Activated CD4-positive, alpha-beta memory T cell treated with anti-CD3 and anti-CD28 coated beads, Interleukin-2, amount 10 ng/mL, durations not matched to agents 7 days and 5 days (primary cell): ENCODE measurements at regions of chr1 and their contacts with region 1.

Region 1: DNA sequence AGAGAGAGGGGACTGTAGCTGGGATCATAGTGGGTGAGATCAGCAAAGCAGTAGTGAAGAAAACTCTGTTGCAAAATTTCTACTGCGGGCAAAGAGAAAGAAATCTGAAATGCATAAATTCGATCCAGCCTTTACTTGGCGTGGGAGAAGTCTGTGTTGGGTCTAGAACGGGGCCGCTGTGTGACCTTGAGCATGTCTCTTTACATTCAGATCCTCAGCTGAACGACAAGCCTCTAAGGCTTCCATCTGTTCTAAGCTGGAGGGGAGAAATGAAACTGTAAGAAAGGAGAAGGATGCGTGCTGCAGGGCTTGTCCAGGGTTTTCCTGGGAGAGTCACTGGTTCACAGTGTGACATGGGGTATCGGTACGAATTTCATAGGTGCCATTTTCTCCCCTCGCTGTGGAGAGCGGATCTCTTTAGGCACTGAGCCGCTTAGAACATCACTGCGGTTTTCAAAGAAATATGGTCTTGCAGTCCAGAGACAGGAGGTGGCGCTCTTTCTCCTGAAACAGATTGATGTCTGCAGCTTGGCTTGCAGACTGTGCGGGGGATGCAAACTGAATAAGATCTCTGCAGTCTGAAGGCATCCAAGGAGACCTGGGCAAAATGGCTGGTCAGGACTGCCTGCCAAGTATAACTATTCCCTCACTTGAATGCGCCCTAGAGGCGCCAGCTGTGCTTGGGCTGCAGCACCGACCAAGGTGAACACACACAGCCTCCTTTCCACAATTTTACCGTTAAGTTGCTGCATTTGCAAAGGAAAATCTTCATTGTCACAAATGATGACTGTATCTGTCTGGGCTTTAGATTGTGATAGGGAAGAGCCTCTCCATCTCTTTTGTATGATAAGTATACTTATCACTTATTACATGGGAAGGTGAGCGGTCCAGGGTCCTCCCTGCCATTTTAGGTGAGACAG is 104.1 kb downstream of the XCL2 start:
- DNase-seq: peak; percentile 88
- H3K4me3 Mint-ChIP-seq: peak overlapping the region; percentile 64
- H3K27ac Mint-ChIP-seq: peak overlapping the region; percentile 63
- H3K4me1 Mint-ChIP-seq: peaks cover 50% of the 10 kb centered on the region
- H3K27me3 Mint-ChIP-seq: peaks cover 2% of the 10 kb centered on the region

Region 2: DNA sequence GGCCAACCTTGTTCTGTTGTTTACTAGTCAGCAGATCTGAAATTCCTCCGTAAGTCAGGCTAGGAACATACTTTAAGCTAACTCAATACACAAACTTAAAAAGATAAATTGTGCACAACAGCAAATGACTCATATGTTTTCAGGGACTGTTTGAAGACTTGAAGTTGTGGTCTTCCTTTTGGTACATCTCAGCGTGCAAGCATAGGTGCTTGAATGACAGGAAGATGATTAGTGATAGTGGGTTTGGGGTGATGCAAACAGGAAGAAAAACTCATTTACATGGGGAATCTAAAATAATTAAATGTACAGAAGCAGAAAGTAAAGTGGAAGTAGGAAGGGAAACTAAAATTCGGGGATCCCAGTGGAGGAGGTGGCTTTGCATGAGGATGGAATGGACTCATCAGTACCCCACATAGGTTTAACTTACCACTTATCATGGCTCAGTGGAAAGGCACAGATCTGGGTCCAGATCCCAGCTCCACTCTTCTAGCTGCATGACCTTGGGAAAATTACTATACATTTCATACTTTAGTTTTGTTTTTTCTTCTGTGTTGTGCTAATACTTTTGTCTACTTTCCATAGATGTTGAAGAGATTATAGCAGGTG is 18.2 kb before region 1 on chr1:
- CTCF ChIA-PET with region 1: interaction called, 22 read pairs
- POLR2A ChIA-PET with region 1: interaction called, 5 read pairs
- DNase-seq: peak; percentile 41
- H3K4me3 Mint-ChIP-seq: peak overlapping the region; percentile 45
- H3K27ac Mint-ChIP-seq: peak overlapping the region; percentile 86
- H3K4me1 Mint-ChIP-seq: peaks cover 42% of the 10 kb centered on the region
- H3K27me3 Mint-ChIP-seq: peaks cover 2% of the 10 kb centered on the region

Region 3: DNA sequence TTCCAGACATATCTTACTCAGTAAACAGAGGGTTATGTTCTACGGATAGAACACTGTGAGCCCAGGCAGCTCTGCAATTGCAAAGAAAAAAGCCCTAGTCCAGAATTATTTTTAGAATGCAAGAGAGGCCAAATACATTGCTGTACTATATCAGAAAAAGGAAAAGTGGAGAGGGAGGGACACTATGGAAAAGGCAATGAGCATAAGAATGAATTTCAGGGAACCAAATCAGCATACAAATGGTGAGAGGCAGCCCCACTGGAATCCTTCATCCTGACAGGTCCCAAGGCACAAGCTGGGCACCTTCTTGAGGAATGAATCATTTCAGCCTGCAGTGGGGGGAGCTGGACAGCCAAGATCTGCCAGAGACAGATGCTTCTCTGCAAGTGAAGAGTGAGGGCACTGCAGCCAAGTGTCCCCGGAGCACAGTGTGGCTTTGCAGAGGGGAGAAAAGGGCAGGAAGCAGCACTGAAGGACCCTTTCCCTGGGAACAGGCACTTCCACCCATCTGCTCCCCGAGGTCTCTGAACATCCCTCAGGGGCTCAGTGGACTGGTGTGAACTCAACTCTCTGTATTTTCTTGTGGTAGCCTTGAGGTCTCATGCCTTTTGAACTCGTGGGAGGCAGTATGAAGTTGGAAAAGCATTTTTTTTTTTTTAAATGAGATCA is 11.5 kb before region 1 on chr1:
- CTCF ChIA-PET with region 1: interaction called, 22 read pairs
- POLR2A ChIA-PET with region 1: interaction called, 3 read pairs
- DNase-seq: no peak
- H3K4me3 Mint-ChIP-seq: no peak overlapping the region
- H3K27ac Mint-ChIP-seq: no peak overlapping the region
- H3K4me1 Mint-ChIP-seq: peaks cover 12% of the 10 kb centered on the region
- H3K27me3 Mint-ChIP-seq: peaks cover 2% of the 10 kb centered on the region

Region 4: GRCh38 chr1:168466092-168466713 is 26.5 kb after region 1 on chr1:
- CTCF ChIA-PET with region 1: interaction called, 8 read pairs
- POLR2A ChIA-PET with region 1: interaction called, 15 read pairs
- DNase-seq: peak; percentile 44
- H3K4me3 Mint-ChIP-seq: no peak overlapping the region
- H3K27ac Mint-ChIP-seq: peak overlapping the region; percentile 82
- H3K4me1 Mint-ChIP-seq: peaks cover 62% of the 10 kb centered on the region
- H3K27me3 Mint-ChIP-seq: peaks cover 6% of the 10 kb centered on the region

Region 5: DNA sequence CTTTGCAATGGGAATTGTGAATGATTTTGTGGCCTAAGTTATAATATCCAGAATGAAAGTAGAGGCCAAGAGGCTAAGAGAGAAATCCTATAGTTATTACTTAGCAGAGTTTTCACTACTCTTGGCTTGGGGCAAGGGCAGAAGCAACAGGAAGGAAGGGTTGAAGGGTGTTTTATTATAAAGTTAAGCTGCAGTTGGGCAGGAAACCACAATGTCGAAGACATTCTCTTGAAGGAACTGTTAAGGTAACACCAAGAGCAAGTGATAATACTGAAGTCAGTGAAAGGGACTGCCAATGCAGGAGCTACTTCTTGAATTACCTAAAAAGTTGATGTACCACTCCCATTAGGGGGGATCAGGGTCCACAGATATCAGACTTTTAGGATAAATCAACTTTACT is 95.8 kb after region 1 on chr1:
- CTCF ChIA-PET with region 1: interaction called, 3 read pairs
- POLR2A ChIA-PET with region 1: interaction called, 11 read pairs
- DNase-seq: peak; percentile 37
- H3K4me3 Mint-ChIP-seq: peak overlapping the region; percentile 54
- H3K27ac Mint-ChIP-seq: peak overlapping the region; percentile 83
- H3K4me1 Mint-ChIP-seq: peaks cover 48% of the 10 kb centered on the region
- H3K27me3 Mint-ChIP-seq: peaks cover 4% of the 10 kb centered on the region

Region 6: DNA sequence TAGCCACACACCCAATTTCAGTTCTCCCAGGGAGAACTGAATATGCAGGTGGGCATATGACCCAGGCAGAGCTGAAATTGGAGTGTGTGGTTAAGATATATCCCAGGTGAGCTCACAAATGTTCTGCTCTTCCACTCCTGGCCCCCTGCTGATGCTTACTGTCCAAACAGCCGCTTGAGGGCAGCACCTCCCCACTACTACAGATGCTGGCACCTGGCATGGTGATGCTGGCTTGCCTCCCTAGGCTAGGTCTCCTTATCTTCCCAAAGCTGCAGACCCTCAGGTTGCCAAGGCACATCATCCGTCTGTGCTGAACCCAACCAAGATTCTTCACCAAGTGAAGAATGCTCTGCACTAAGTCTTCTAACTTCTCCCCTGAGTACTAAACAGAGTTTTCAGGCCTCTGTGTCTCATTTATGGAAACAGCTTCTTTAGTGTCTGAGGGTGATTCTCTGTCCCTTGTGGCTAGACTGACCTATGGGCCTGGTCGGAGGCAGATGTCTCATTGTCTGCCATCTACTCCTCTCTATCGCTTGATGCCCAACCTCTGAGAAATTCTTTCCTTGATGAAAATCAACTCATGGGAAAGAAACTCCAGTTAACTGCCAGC is 163.9 kb after region 1 on chr1:
- CTCF ChIA-PET with region 1: interaction called, 27 read pairs
- POLR2A ChIA-PET with region 1: interaction called, 5 read pairs
- DNase-seq: peak; percentile 76
- H3K4me3 Mint-ChIP-seq: no peak overlapping the region
- H3K27ac Mint-ChIP-seq: no peak overlapping the region
- H3K4me1 Mint-ChIP-seq: no peaks in the 10 kb centered on the region
- H3K27me3 Mint-ChIP-seq: peaks cover 6% of the 10 kb centered on the region

Region 7: GRCh38 chr1:168728473-168729404 is 289.0 kb after region 1 on chr1 and contains the start of gene DPT:
- CTCF ChIA-PET with region 1: no interaction called
- POLR2A ChIA-PET with region 1: no interaction called
- DNase-seq: no peak
- H3K4me3 Mint-ChIP-seq: no peak within 1 kb of the TSS
- H3K27ac Mint-ChIP-seq: no peak within 1 kb of the TSS
- H3K4me1 Mint-ChIP-seq: no peaks in the 10 kb centered on the region
- H3K27me3 Mint-ChIP-seq: peaks cover 3% of the 10 kb centered on the region
- total RNA-seq, gene DPT: not detected

Region 8: DNA sequence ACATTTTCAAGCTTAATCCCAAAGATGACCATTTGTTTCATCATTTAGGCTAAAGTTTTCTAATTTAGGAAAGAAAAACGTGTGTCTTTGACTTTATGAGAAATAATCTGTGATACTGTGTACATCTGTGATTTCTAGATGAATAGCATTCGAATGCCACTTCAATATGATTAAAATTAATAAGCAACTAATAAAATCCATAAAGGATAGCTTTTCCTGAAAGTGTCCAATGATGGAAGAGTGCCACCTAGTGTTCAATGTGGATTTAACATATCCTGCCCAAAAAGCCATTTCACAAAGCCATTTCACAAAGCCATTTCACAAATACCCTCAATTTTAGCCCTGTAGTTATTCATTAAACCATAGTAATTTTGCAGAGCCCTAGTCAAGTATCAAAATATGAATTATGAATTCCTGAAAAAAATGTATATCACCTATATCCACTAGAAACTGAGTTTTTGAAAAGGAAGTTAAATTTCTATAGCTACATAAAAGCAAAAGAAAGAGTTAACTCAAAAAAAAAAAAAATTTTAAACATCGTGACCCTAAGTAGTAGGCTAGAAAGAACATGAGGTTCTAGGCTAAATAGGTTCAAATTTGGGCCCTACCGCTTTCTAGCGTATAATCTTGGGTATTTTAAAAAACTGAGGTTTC is 908.8 kb after region 1 on chr1:
- CTCF ChIA-PET with region 1: interaction called, 11 read pairs
- POLR2A ChIA-PET with region 1: interaction called, 3 read pairs
- DNase-seq: no peak
- H3K4me3 Mint-ChIP-seq: no peak overlapping the region
- H3K27ac Mint-ChIP-seq: no peak overlapping the region
- H3K4me1 Mint-ChIP-seq: peaks cover 16% of the 10 kb centered on the region
- H3K27me3 Mint-ChIP-seq: peaks cover 2% of the 10 kb centered on the region